Activated B cell treated with CpG ODN at 0.5 μM for 24 hours (primary cell): ENCODE measurements at regions of chr3 and their contacts with region 1.

Region 1: GRCh38 chr3:143763564-143764162 is 84.6 kb downstream of the SLC9A9 start:
- DNase-seq: no peak
- ATAC-seq: no peak
- H3K4me3 Mint-ChIP-seq: no peak overlapping the region
- H3K27ac Mint-ChIP-seq: no peak overlapping the region
- H3K4me1 Mint-ChIP-seq: peaks cover 3% of the 10 kb centered on the region
- H3K27me3 Mint-ChIP-seq: no peaks in the 10 kb centered on the region
- CTCF ChIP-seq: no peak

Region 2: DNA sequence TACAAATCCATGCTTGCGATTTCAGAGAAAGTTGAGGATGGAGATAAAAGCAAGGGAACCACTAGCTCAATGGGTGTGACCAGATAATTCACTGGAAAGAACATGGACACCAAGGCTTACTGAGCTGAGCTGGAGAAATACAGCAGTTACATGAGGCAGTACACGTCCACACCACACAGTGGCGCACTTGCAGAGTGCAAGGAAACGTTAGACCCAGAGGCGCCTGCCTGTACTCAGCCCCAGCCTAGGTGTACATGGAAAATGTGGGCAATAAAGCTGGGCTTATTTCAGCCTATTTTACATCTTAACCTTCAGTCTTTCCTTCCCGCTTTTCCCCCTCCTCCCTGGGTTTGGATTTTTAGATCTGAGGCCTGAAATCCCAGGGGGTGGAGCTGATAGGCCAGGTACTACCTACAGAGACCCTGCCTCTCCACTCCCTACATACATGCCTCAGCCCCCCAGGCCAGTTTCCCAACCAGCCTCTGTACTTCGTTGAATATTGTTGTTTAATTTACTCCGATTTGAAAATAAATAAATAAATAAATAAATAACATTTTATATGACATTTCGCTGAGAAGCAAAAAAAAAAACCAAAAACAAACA is 934.9 kb before region 1 on chr3:
- CTCF ChIA-PET with region 1: no interaction called
- POLR2A ChIA-PET with region 1: no interaction called
- intact Hi-C with region 1: loop called (anchors 5 kb)
- DNase-seq: no peak
- ATAC-seq: peak; percentile 75
- H3K4me3 Mint-ChIP-seq: no peak overlapping the region
- H3K27ac Mint-ChIP-seq: no peak overlapping the region
- H3K4me1 Mint-ChIP-seq: no peaks in the 10 kb centered on the region
- H3K27me3 Mint-ChIP-seq: peaks cover 12% of the 10 kb centered on the region
- CTCF ChIP-seq: no peak

Region 3: DNA sequence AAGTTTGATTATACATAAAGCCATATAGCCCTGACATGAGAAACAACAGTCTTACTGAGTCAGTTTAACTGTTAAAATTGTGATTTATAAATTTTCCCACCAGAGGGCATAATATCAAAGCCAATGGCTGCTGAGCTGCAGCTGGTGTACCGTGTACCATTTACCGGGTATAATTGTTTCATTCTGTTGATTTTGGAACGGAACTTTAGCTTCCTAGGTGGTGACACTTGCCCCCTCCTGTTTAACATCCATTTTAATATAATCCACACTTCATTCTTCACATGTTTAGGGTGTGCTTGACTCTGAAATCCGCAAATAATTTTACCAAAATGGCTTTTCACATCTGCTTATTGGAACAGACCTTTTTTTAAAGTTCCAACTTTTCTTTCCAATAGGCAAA is 11.8 kb after region 1 on chr3:
- CTCF ChIA-PET with region 1: no interaction called
- POLR2A ChIA-PET with region 1: no interaction called
- intact Hi-C with region 1: no loop called
- DNase-seq: no peak
- ATAC-seq: peak; percentile 70
- H3K4me3 Mint-ChIP-seq: no peak overlapping the region
- H3K27ac Mint-ChIP-seq: no peak overlapping the region
- H3K4me1 Mint-ChIP-seq: peaks cover 3% of the 10 kb centered on the region
- H3K27me3 Mint-ChIP-seq: no peaks in the 10 kb centered on the region
- CTCF ChIP-seq: no peak